ENCODE measurements at regions of chr13 and their contacts with region 1.

Region 1: GRCh38 chr13:97975848-97976609 is 22.6 kb downstream of the IPO5 start:
- DNase-seq: peak; percentile 96
- H3K4me3 ChIP-seq: peak overlapping the region; percentile 69
- H3K27ac ChIP-seq: peak overlapping the region; percentile 94
- H3K4me1 ChIP-seq: peaks cover 18% of the 10 kb centered on the region
- H3K27me3 ChIP-seq: no peaks in the 10 kb centered on the region
- CTCF ChIP-seq: no peak

Region 2: DNA sequence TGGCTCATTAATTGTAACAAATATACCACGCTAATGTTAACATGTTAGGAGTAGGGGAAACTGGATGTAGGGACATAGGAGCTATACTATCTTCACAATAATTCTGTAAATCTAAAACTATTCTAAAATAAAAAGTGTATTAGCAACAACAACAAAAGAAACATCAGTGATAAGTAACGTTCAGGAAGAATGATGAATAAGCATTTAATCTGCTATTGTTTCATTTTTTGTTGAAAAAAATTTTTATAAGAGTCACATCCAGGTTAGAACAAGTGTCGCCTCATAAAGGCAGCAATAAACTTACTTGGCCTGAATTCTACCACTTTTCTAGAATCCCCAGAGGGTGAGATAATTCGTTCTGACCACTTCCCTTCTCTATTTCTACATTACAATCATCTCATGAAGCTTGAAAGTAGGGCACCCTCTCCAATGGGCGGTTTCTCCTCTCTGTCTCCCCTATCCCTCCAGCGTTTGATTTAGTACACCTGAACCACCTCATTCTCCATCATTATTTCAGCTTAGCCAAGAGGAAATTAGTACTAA is 275.7 kb before region 1 on chr13:
- CTCF ChIA-PET with region 1: no interaction called
- POLR2A ChIA-PET with region 1: no interaction called
- intact Hi-C with region 1: no loop called
- DNase-seq: no peak
- H3K4me3 ChIP-seq: no peak overlapping the region
- H3K27ac ChIP-seq: no peak overlapping the region
- H3K4me1 ChIP-seq: no peaks in the 10 kb centered on the region
- H3K27me3 ChIP-seq: no peaks in the 10 kb centered on the region
- CTCF ChIP-seq: no peak

Region 3: GRCh38 chr13:97879646-97880310 is 96.3 kb before region 1 on chr13:
- CTCF ChIA-PET with region 1: no interaction called
- POLR2A ChIA-PET with region 1: interaction called, 12 read pairs
- intact Hi-C with region 1: no loop called
- DNase-seq: peak; percentile 96
- H3K4me3 ChIP-seq: no peak overlapping the region
- H3K27ac ChIP-seq: peak overlapping the region; percentile 91
- H3K4me1 ChIP-seq: peaks cover 23% of the 10 kb centered on the region
- H3K27me3 ChIP-seq: no peaks in the 10 kb centered on the region
- CTCF ChIP-seq: no peak

Region 4: GRCh38 chr13:97946951-97947588 is 29.0 kb before region 1 on chr13:
- CTCF ChIA-PET with region 1: no interaction called
- POLR2A ChIA-PET with region 1: no interaction called
- intact Hi-C with region 1: loop called (anchors 2 kb)
- DNase-seq: peak; percentile 96
- H3K4me3 ChIP-seq: no peak overlapping the region
- H3K27ac ChIP-seq: peak overlapping the region; percentile 99
- H3K4me1 ChIP-seq: peaks cover 58% of the 10 kb centered on the region
- H3K27me3 ChIP-seq: no peaks in the 10 kb centered on the region
- CTCF ChIP-seq: no peak